ENCODE measurements at regions of chr3 and their contacts with region 1.

Region 1: DNA sequence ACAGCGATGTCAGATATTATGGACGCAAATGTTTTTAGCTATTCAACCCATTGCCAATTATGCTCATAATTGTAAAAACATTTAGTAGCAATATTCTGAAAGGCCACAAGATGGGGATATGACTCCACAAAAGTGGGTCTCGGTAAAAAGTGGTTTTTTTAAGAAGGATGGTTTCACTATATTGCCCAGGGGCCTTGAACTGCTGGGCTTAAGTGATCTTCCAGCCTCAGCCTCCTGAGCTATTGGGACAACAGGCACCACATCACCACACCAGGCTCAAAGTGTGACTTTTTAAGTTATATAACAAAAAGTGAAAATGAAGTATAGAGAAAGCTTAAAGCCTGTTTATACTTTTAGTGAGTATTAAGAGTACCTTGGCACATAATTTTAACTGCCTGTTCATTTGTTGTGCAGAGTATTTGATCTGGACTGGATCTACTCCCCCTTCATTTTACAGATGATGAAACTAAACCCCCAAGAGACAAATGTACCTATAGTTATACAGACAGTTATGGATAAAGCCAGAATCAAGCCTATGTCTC is 9.4 kb downstream of the NAA50 start:
- DNase-seq: peak in 4 of 9 experiments; percentile 21 to 83 (median 54)
- ATAC-seq: peak; percentile 91
- H3K4me3 ChIP-seq: no peak overlapping the region
- H3K4me3 Mint-ChIP-seq: no peak overlapping the region
- H3K27ac ChIP-seq: peak overlapping the region in 1 of 2 experiments; percentile 53
- H3K27ac Mint-ChIP-seq: peak overlapping the region; percentile 84
- H3K4me1 ChIP-seq: peaks cover 16% of the 10 kb centered on the region
- H3K4me1 Mint-ChIP-seq: peaks cover 59% of the 10 kb centered on the region
- H3K27me3 ChIP-seq: no peaks in the 10 kb centered on the region
- H3K27me3 Mint-ChIP-seq: no peaks in the 10 kb centered on the region
- CTCF ChIP-seq: peak; percentile 73

Region 2: DNA sequence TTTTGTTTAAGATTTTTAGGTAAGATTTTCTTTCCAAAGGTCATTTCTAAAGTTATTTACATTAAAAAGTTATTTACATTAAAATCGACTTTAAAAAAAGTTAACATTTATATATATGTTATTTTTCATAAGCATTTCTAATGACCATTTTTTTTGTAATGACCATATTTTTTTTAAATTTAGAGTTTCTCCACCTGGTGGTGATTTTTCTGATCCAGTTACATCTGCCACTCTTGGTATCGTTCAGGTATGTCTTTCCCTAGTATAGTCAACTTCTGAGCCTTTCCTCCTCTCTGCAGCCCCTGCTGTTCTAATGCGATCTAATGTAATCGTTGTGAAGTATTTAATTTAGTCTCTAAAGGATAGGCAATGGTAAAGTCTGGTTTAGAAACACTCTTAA is 59.1 kb after region 1 on chr3:
- CTCF ChIA-PET with region 1: interaction called, 3 read pairs
- POLR2A ChIA-PET with region 1: no interaction called
- intact Hi-C with region 1: loop called (anchors 1 to 5 kb)
- DNase-seq: peak in 1 of 9 experiments; percentile 12
- ATAC-seq: no peak
- H3K4me3 ChIP-seq: no peak overlapping the region
- H3K4me3 Mint-ChIP-seq: no peak overlapping the region
- H3K27ac ChIP-seq: no peak overlapping the region
- H3K27ac Mint-ChIP-seq: no peak overlapping the region
- H3K4me1 ChIP-seq: no peaks in the 10 kb centered on the region
- H3K4me1 Mint-ChIP-seq: no peaks in the 10 kb centered on the region
- H3K27me3 ChIP-seq: no peaks in the 10 kb centered on the region
- H3K27me3 Mint-ChIP-seq: no peaks in the 10 kb centered on the region
- CTCF ChIP-seq: no peak

Region 3: GRCh38 chr3:113912552-113913236 is 176.1 kb after region 1 on chr3:
- CTCF ChIA-PET with region 1: interaction called, 4 read pairs
- POLR2A ChIA-PET with region 1: no interaction called
- intact Hi-C with region 1: loop called (anchors 1 kb)
- DNase-seq: peak in 5 of 9 experiments; percentile 21 to 76 (median 23)
- ATAC-seq: peak; percentile 97
- H3K4me3 ChIP-seq: peak overlapping the region; percentile 13 to 18
- H3K4me3 Mint-ChIP-seq: peak overlapping the region; percentile 56
- H3K27ac ChIP-seq: peak overlapping the region in 1 of 2 experiments; percentile 14
- H3K27ac Mint-ChIP-seq: peak overlapping the region; percentile 30
- H3K4me1 ChIP-seq: peaks cover 5% of the 10 kb centered on the region
- H3K4me1 Mint-ChIP-seq: peaks cover 6% of the 10 kb centered on the region
- H3K27me3 ChIP-seq: no peaks in the 10 kb centered on the region
- H3K27me3 Mint-ChIP-seq: no peaks in the 10 kb centered on the region
- CTCF ChIP-seq: peak; percentile 65

Region 4: GRCh38 chr3:114152519-114153151 is 416.0 kb after region 1 on chr3:
- CTCF ChIA-PET with region 1: interaction called, 4 read pairs
- POLR2A ChIA-PET with region 1: no interaction called
- intact Hi-C with region 1: loop called in 1 of 2 experiments (anchors 5 kb)
- DNase-seq: peak; percentile 76 to 91 (median 87)
- ATAC-seq: peak; percentile 100
- H3K4me3 ChIP-seq: peak overlapping the region; percentile 46 to 50
- H3K4me3 Mint-ChIP-seq: peak overlapping the region; percentile 73
- H3K27ac ChIP-seq: peak overlapping the region in 1 of 2 experiments; percentile 47
- H3K27ac Mint-ChIP-seq: no peak overlapping the region
- H3K4me1 ChIP-seq: peaks cover 8% of the 10 kb centered on the region
- H3K4me1 Mint-ChIP-seq: peaks cover 10% of the 10 kb centered on the region
- H3K27me3 ChIP-seq: no peaks in the 10 kb centered on the region
- H3K27me3 Mint-ChIP-seq: no peaks in the 10 kb centered on the region
- CTCF ChIP-seq: peak; percentile 99

Region 5: DNA sequence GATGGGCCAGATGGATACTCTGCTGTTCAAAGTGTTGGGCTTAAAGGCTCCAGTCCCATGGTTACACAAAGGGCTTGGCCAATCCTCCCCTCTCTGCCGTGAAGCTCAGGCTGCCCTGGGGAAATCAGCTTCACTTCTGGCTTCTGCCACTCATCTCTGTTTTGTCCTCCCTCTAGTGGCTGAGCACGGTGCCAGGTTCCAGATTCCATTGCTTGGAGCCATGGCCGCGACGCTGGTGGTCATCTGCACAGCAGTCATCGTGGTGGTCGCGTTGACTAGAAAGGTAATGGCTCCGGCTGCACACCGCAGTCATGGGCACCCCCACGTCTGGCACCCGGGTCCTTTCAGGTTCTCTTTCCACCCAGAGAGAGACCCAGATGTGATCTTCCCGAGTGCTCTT is 562.8 kb after region 1 on chr3:
- CTCF ChIA-PET with region 1: no interaction called
- POLR2A ChIA-PET with region 1: no interaction called
- intact Hi-C with region 1: loop called (anchors 5 to 10 kb)
- DNase-seq: peak in 5 of 9 experiments; percentile 30 to 77 (median 46)
- ATAC-seq: peak; percentile 59
- H3K4me3 ChIP-seq: peak overlapping the region in 1 of 2 experiments; percentile 55
- H3K4me3 Mint-ChIP-seq: peak overlapping the region; percentile 72
- H3K27ac ChIP-seq: peak overlapping the region in 1 of 2 experiments; percentile 89
- H3K27ac Mint-ChIP-seq: peak overlapping the region; percentile 80
- H3K4me1 ChIP-seq: peaks cover 11% of the 10 kb centered on the region
- H3K4me1 Mint-ChIP-seq: peaks cover 45% of the 10 kb centered on the region
- H3K27me3 ChIP-seq: no peaks in the 10 kb centered on the region
- H3K27me3 Mint-ChIP-seq: no peaks in the 10 kb centered on the region
- CTCF ChIP-seq: peak; percentile 38

Measured in CD8-positive, alpha-beta T cell (primary cell).